B cell (primary cell): ENCODE measurements at regions of chr12 and their contacts with region 1.

Region 1: DNA sequence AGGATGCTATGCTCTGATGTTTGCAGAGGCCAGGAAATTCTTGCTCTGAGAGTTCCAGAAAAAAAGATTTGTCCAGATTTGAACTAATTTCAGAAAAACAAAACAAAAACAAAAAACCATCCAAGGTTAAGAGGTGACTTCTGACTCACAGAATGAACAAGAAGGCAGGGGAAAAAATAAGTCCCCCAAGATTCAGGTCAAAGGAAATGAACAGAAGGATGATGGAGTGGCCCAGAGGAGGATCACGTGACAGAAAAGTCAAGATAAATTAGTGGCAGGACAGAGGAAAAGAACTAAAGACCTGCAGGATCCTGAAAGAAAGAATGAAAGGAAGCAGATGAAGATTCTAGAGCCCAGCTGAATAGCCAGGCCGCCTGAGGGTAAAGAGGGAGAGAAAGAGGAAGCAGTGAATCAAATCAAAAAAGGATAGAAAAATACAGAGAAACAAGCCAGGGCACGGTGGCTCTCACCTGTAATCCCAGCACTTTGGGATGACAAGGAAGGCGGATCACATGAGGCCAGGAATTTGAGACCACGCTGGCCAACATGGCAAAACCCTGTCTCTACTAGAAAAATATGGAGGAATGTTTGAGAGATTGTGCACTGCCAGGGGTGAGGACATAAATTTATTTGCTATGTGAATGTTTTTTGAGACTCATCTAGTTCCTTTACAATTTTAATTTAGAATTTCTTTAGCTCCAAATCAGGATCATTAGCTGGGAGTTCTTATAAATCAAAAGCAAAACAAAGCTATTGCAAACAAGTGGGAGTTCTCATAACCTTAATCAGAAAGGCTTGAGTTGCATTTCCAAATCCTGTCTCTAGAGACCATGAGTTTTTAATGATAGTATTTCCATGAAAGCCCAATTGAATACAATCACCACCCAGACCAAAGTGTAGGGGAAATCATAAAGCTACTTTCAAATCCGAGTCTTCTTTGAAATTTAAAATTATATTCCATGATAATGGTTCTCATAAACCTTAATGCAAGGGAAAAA is 217.1 kb upstream of the PLEKHG7 start:
- DNase-seq: peak; percentile 52
- ATAC-seq: peak; percentile 15
- H3K4me3 ChIP-seq: peak overlapping the region in 1 of 5 experiments; percentile 20
- H3K4me3 Mint-ChIP-seq: peak overlapping the region; percentile 64
- H3K27ac ChIP-seq: peak overlapping the region; percentile 59 to 81
- H3K27ac Mint-ChIP-seq: peak overlapping the region; percentile 96
- H3K4me1 ChIP-seq: peaks cover 68 to 81% of the 10 kb centered on the region in 2 donors
- H3K4me1 Mint-ChIP-seq: peaks cover 77% of the 10 kb centered on the region
- H3K27me3 ChIP-seq: no peaks in the 10 kb centered on the region
- H3K27me3 Mint-ChIP-seq: no peaks in the 10 kb centered on the region
- CTCF ChIP-seq: no peak

Region 2: GRCh38 chr12:92466391-92467305 is 19.0 kb before region 1 on chr12:
- CTCF ChIA-PET with region 1: interaction called, 5 read pairs
- POLR2A ChIA-PET with region 1: interaction called, 4 read pairs
- intact Hi-C with region 1: loop called (anchors 1 kb)
- DNase-seq: peak; percentile 87
- ATAC-seq: peak; percentile 76
- H3K4me3 ChIP-seq: peak overlapping the region; percentile 61 to 93 (median 68)
- H3K4me3 Mint-ChIP-seq: peak overlapping the region; percentile 94
- H3K27ac ChIP-seq: peak overlapping the region; percentile 85 to 93
- H3K27ac Mint-ChIP-seq: peak overlapping the region; percentile 95
- H3K4me1 ChIP-seq: peaks cover 80 to 83% of the 10 kb centered on the region in 2 donors
- H3K4me1 Mint-ChIP-seq: peaks cover 81% of the 10 kb centered on the region
- H3K27me3 ChIP-seq: no peaks in the 10 kb centered on the region
- H3K27me3 Mint-ChIP-seq: no peaks in the 10 kb centered on the region
- CTCF ChIP-seq: no peak

Region 3: GRCh38 chr12:92473564-92473963 is 12.1 kb before region 1 on chr12:
- CTCF ChIA-PET with region 1: interaction called, 20 read pairs
- POLR2A ChIA-PET with region 1: interaction called, 4 read pairs
- intact Hi-C with region 1: loop called (anchors 1 kb)
- DNase-seq: no peak
- ATAC-seq: no peak
- H3K4me3 ChIP-seq: peak overlapping the region in 1 of 5 experiments; percentile 36
- H3K4me3 Mint-ChIP-seq: peak overlapping the region; percentile 74
- H3K27ac ChIP-seq: peak overlapping the region; percentile 79 to 85
- H3K27ac Mint-ChIP-seq: peak overlapping the region; percentile 91
- H3K4me1 ChIP-seq: peaks cover 88 to 93% of the 10 kb centered on the region in 2 donors
- H3K4me1 Mint-ChIP-seq: peaks cover 88% of the 10 kb centered on the region
- H3K27me3 ChIP-seq: no peaks in the 10 kb centered on the region
- H3K27me3 Mint-ChIP-seq: no peaks in the 10 kb centered on the region
- CTCF ChIP-seq: no peak

Region 4: DNA sequence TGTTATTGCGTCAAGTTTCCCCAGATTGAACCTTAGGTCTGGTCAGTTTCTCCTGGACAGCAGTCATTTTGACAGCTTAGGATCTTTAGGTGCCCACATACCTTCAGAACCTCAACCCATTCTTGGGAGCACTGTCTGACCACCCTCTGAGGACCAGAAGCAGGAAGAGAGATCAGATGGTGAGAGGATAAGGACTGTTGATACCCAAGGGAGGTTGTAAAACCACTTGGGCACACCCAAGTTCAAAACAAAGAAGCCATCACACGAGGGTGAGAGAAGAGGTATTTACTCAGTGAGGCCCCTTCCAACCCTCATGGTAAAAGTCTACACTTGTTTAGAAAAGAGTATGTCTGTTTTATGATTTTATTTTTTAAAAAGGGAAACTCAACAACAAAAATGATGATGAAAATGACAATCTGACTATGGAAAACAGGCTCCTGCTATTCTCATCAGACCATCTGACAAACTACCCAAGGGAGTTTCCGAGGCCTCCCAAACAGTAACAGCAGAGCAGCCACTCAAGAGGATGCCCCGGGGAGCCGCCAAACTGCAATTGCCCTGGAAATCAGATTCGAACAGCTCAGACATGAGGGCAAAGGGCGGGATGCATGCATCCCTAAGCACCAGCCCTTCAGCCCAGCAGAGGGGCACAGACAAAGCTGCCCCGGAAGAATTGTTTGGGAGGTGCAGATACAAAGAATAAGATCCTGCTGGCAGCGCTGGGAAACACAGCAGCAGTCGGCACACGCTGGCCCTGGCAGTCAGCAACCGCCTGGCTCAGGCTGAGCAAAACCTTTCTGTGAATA is 54.5 kb after region 1 on chr12:
- CTCF ChIA-PET with region 1: interaction called, 4 read pairs
- POLR2A ChIA-PET with region 1: interaction called, 4 read pairs
- intact Hi-C with region 1: loop called (anchors 5 kb)
- DNase-seq: peak; percentile 52
- ATAC-seq: peak; percentile 59
- H3K4me3 ChIP-seq: peak overlapping the region in 1 of 5 experiments; percentile 27
- H3K4me3 Mint-ChIP-seq: peak overlapping the region; percentile 84
- H3K27ac ChIP-seq: peak overlapping the region; percentile 68 to 93
- H3K27ac Mint-ChIP-seq: peak overlapping the region; percentile 97
- H3K4me1 ChIP-seq: peaks cover 64 to 68% of the 10 kb centered on the region in 2 donors
- H3K4me1 Mint-ChIP-seq: peaks cover 71% of the 10 kb centered on the region
- H3K27me3 ChIP-seq: no peaks in the 10 kb centered on the region
- H3K27me3 Mint-ChIP-seq: no peaks in the 10 kb centered on the region
- CTCF ChIP-seq: no peak

Region 5: GRCh38 chr12:92556141-92556540 is 70.5 kb after region 1 on chr12:
- CTCF ChIA-PET with region 1: interaction called, 4 read pairs
- POLR2A ChIA-PET with region 1: no interaction called
- intact Hi-C with region 1: loop called (anchors 5 kb)
- DNase-seq: peak; percentile 61
- ATAC-seq: peak; percentile 59
- H3K4me3 ChIP-seq: peak overlapping the region in 3 of 5 experiments; percentile 28 to 50 (median 33)
- H3K4me3 Mint-ChIP-seq: peak overlapping the region; percentile 71
- H3K27ac ChIP-seq: peak overlapping the region; percentile 72 to 73
- H3K27ac Mint-ChIP-seq: peak overlapping the region; percentile 86
- H3K4me1 ChIP-seq: peaks cover 57 to 65% of the 10 kb centered on the region in 2 donors
- H3K4me1 Mint-ChIP-seq: peaks cover 61% of the 10 kb centered on the region
- H3K27me3 ChIP-seq: no peaks in the 10 kb centered on the region
- H3K27me3 Mint-ChIP-seq: no peaks in the 10 kb centered on the region
- CTCF ChIP-seq: no peak

Region 6: DNA sequence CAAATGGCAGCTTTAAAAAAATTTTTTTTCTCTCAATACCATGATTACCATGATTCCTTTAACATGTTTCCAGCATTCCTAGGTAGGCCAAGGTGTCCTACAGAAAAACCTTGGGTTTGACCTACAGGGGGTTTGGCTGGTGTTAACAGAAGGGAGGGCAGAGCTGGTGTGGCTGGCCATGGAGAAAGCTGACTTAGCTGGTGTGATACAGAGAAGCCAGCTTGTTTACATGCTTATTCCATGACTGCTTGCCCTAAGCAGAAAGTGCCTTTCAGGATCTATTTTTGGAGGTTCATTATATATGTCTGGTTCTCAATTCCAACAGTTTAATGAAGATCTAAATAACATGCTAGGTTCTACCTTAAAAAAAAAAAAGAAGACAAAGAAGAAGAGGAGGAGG is 374.9 kb after region 1 on chr12:
- CTCF ChIA-PET with region 1: no interaction called
- POLR2A ChIA-PET with region 1: no interaction called
- intact Hi-C with region 1: no loop called
- DNase-seq: no peak
- ATAC-seq: no peak
- H3K4me3 ChIP-seq: no peak overlapping the region
- H3K4me3 Mint-ChIP-seq: no peak overlapping the region
- H3K27ac ChIP-seq: no peak overlapping the region
- H3K27ac Mint-ChIP-seq: no peak overlapping the region
- H3K4me1 ChIP-seq: no peaks in the 10 kb centered on the region
- H3K4me1 Mint-ChIP-seq: peaks cover 9% of the 10 kb centered on the region
- H3K27me3 ChIP-seq: no peaks in the 10 kb centered on the region
- H3K27me3 Mint-ChIP-seq: no peaks in the 10 kb centered on the region
- CTCF ChIP-seq: no peak

Region 7: GRCh38 chr12:93089805-93090569 is 604.3 kb after region 1 on chr12:
- CTCF ChIA-PET with region 1: no interaction called
- POLR2A ChIA-PET with region 1: no interaction called
- intact Hi-C with region 1: no loop called
- DNase-seq: no peak
- ATAC-seq: no peak
- H3K4me3 ChIP-seq: no peak overlapping the region
- H3K4me3 Mint-ChIP-seq: no peak overlapping the region
- H3K27ac ChIP-seq: no peak overlapping the region
- H3K27ac Mint-ChIP-seq: no peak overlapping the region
- H3K4me1 ChIP-seq: peaks cover 2% of the 10 kb centered on the region in 2 donors
- H3K4me1 Mint-ChIP-seq: peaks cover 3% of the 10 kb centered on the region
- H3K27me3 ChIP-seq: no peaks in the 10 kb centered on the region
- H3K27me3 Mint-ChIP-seq: no peaks in the 10 kb centered on the region
- CTCF ChIP-seq: no peak